Calu3 (cell line): ENCODE measurements at regions of chr2 and their contacts with region 1.

Region 1: GRCh38 chr2:88159955-88160415 is 10.2 kb upstream of the THNSL2 start:
- DNase-seq: peak; percentile 64
- H3K4me3 Mint-ChIP-seq: no peak overlapping the region
- H3K27ac Mint-ChIP-seq: no peak overlapping the region
- H3K4me1 Mint-ChIP-seq: no peaks in the 10 kb centered on the region
- H3K27me3 Mint-ChIP-seq: peaks cover 24% of the 10 kb centered on the region
- CTCF ChIP-seq: peak; percentile 63

Region 2: DNA sequence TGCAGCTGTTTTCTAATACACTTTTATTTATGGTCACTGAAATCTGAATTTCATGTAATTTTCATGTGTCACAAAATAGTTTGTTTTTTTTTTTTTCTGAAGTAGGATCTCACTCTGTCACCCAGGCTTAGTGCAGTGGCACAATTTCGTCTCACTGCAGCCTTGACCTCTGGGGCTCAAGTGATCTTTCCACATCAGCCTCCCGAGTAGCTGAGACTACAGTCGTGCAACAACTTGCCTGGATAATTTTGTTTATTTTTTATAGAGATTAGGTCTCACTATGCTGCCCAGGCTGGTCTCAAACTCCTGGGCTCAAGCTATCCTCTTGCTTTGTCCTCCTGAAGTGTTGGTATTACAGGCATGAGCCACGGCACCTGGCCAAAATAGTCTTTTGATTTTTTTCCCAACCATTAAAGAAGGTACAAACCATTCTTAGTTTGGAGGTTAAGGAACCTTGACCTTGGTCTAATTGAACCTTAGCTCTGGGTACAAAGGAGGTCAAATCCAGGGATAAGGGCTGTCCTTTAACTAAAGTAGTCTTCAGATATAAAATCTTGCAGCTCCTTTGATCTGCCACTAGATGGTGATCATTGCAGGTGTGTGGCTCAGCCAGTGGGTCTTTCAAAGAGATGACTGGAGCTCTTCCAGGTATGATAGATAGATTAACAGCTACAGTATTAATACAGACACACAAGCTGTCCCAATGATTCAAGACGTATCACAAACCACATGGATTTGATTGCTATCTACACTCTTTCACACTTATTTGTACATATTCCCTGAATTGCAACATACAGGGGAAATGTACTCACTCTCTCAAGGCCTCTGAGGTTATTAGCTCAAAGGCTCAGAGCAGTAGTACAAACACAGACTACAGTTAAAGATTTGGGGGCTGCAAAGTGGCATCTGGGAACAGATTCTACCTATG is 99.7 kb before region 1 on chr2:
- CTCF ChIA-PET with region 1: interaction called, 83 read pairs
- intact Hi-C with region 1: loop called (anchors 2 kb)
- DNase-seq: no peak
- H3K4me3 Mint-ChIP-seq: no peak overlapping the region
- H3K27ac Mint-ChIP-seq: no peak overlapping the region
- H3K4me1 Mint-ChIP-seq: peaks cover 26% of the 10 kb centered on the region
- H3K27me3 Mint-ChIP-seq: no peaks in the 10 kb centered on the region
- CTCF ChIP-seq: peak; percentile 62

Region 3: GRCh38 chr2:88258208-88258607 is 98.2 kb after region 1 on chr2:
- CTCF ChIA-PET with region 1: no interaction called
- intact Hi-C with region 1: no loop called
- DNase-seq: no peak
- H3K4me3 Mint-ChIP-seq: no peak overlapping the region
- H3K27ac Mint-ChIP-seq: no peak overlapping the region
- H3K4me1 Mint-ChIP-seq: peaks cover 4% of the 10 kb centered on the region
- H3K27me3 Mint-ChIP-seq: peaks cover 11% of the 10 kb centered on the region
- CTCF ChIP-seq: no peak